Panc1 (cell line): ENCODE measurements at regions of chr15 and their contacts with region 1.

Region 1: GRCh38 chr15:51935466-51936104 is 36.0 kb downstream of the LEO1 start:
- DNase-seq: no peak
- ATAC-seq: no peak
- H3K4me3 ChIP-seq: no peak overlapping the region
- H3K27ac ChIP-seq: no peak overlapping the region
- H3K4me1 ChIP-seq: no peaks in the 10 kb centered on the region
- H3K27me3 ChIP-seq: no peaks in the 10 kb centered on the region
- CTCF ChIP-seq: no peak

Region 2: GRCh38 chr15:52191207-52191606 is 255.6 kb after region 1 on chr15 and contains the start of gene GNB5:
- CTCF ChIA-PET with region 1: no interaction called
- POLR2A ChIA-PET with region 1: interaction called, 10 read pairs
- in situ Hi-C with region 1: no loop called
- intact Hi-C with region 1: no loop called
- DNase-seq: no peak
- ATAC-seq: 0 out of 2 replicates have a peak, but pooled peaks have one; percentile 38
- H3K4me3 ChIP-seq: no peak within 1 kb of the TSS
- H3K27ac ChIP-seq: no peak within 1 kb of the TSS
- H3K4me1 ChIP-seq: no peaks in the 10 kb centered on the region
- H3K27me3 ChIP-seq: no peaks in the 10 kb centered on the region
- CTCF ChIP-seq: no peak
- total RNA-seq, gene GNB5: 58.7 TPM